Caco-2 (cell line): ENCODE measurements at regions of chr5 and their contacts with region 1.

Region 1: DNA sequence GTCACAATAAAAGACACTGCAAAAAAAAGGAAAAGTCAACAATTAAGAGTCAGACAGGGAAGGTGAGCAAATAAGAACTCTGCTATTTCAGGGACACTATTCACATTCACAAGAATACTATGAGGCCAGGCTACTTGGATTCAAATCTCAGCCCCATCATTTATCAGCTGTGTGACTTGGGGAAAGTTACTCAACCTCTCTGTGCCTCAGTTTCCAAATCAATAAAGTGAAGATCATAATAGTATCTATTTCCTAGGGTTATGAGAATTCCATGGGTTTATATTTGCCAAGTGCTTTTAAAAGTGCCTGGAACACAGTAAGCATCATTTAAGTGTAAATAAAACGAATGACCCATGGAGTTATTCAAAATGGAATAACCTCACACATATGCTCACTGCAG is 56.4 kb downstream of the ALDH7A1 start:
- DNase-seq: no peak
- H3K4me3 ChIP-seq: no peak overlapping the region
- H3K4me3 Mint-ChIP-seq: no peak overlapping the region
- H3K27ac Mint-ChIP-seq: no peak overlapping the region
- H3K4me1 ChIP-seq: no peaks in the 10 kb centered on the region
- H3K4me1 Mint-ChIP-seq: no peaks in the 10 kb centered on the region
- H3K27me3 ChIP-seq: no peaks in the 10 kb centered on the region
- H3K27me3 Mint-ChIP-seq: no peaks in the 10 kb centered on the region
- CTCF ChIP-seq: no peak

Region 2: DNA sequence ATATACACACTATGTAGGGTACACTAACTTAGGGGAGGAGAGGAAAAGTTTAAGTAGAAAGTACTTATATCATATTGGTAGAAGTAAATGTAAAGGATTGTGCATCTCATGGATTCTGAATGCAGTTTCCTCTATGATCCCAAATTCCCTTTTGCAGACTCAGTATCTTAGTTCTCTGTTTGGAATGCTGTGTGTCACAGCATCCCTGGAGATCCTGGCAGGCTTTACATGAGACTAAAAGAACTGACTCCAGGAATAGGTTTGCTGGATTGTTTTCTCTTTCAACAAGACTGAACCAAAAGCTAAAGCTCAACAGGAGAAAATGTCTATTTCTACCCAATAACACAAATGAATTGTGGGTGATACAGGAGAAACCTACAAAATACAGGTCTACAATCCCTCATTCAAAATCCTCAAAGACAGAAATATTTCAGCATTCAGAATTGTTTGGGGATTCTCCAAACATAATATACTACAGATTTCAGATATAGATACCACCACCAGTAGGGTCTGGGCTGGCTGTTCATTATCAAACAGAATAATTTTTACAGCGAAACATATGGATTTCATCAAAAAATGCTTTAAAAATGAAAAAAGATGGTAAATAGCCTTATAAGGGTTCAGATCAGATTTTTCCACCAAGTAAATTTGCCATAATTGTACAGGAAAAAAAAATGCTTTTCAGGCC is 440.1 kb before region 1 on chr5:
- CTCF ChIA-PET with region 1: no interaction called
- POLR2A ChIA-PET with region 1: no interaction called
- intact Hi-C with region 1: no loop called
- DNase-seq: no peak
- H3K4me3 ChIP-seq: no peak overlapping the region
- H3K4me3 Mint-ChIP-seq: no peak overlapping the region
- H3K27ac Mint-ChIP-seq: no peak overlapping the region
- H3K4me1 ChIP-seq: no peaks in the 10 kb centered on the region
- H3K4me1 Mint-ChIP-seq: no peaks in the 10 kb centered on the region
- H3K27me3 ChIP-seq: no peaks in the 10 kb centered on the region
- H3K27me3 Mint-ChIP-seq: no peaks in the 10 kb centered on the region
- CTCF ChIP-seq: no peak

Region 3: GRCh38 chr5:126234563-126235195 is 303.9 kb before region 1 on chr5:
- CTCF ChIA-PET with region 1: no interaction called
- POLR2A ChIA-PET with region 1: no interaction called
- intact Hi-C with region 1: loop called (anchors 2 kb)
- DNase-seq: peak in 1 of 2 experiments; percentile 17
- H3K4me3 ChIP-seq: no peak overlapping the region
- H3K4me3 Mint-ChIP-seq: no peak overlapping the region
- H3K27ac Mint-ChIP-seq: no peak overlapping the region
- H3K4me1 ChIP-seq: no peaks in the 10 kb centered on the region
- H3K4me1 Mint-ChIP-seq: no peaks in the 10 kb centered on the region
- H3K27me3 ChIP-seq: no peaks in the 10 kb centered on the region
- H3K27me3 Mint-ChIP-seq: peaks cover 4% of the 10 kb centered on the region
- CTCF ChIP-seq: peak; percentile 66 to 67

Region 4: DNA sequence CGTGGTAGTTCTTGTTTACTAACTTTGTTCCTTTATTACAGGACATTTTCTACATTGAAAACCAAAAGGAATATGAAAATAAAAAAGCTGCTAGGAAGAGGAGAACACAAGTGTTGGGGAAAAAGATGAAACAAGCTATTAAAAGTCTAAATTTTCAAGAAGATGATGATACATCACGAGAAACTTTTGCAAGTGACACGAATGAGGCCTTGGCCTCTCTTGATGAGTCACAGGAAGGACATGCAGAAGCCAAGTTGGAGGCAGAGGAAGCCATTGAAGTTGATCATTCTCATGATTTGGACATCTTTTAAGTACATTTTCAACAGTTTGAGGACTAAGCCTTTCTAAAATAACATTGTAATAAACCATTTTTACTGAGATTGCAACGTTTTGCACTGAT is 86.0 kb after region 1 on chr5:
- CTCF ChIA-PET with region 1: interaction called, 12 read pairs
- POLR2A ChIA-PET with region 1: no interaction called
- intact Hi-C with region 1: no loop called
- DNase-seq: no peak
- H3K4me3 ChIP-seq: no peak overlapping the region
- H3K4me3 Mint-ChIP-seq: no peak overlapping the region
- H3K27ac Mint-ChIP-seq: peak overlapping the region; percentile 31
- H3K4me1 ChIP-seq: peaks cover 13% of the 10 kb centered on the region; the same call in 1 of the 2 replicates
- H3K4me1 Mint-ChIP-seq: peaks cover 16% of the 10 kb centered on the region
- H3K27me3 ChIP-seq: no peaks in the 10 kb centered on the region
- H3K27me3 Mint-ChIP-seq: no peaks in the 10 kb centered on the region
- CTCF ChIP-seq: no peak